CD8-positive, alpha-beta T cell (primary cell): ENCODE measurements at regions of chr6 and their contacts with region 1.

Region 1: DNA sequence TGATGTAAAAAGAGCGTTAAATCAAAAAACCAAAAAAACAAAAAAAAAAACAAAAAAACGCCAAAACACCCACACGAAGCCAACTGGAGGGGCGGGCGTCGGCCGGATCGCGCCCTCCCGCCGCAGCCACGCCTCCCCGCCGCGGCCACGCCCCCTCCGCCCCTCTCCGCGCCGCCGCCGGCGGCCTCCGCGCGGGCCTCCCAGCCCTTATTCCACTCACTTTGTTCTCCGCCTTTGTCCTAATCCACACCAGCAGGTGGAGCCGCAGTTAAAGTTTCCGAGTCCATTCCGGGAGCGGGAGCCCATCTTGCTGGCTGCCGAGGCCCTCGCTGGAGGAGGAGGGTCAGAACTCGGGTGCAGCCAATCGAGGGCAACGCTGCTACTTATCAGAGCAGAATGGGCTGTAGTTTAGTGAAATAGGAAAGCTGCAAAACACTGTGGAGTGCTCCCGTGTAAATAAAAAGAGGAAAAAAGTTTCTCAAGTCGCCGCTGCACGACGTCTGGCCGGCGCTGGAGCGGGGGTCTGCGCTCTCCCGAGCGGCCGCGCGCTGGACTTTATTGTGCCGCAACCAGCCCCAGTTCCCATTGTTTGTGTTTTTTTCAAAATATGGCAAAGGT is at the start of gene ASF1A:
- DNase-seq: peak; percentile 90 to 98 (median 95)
- ATAC-seq: peak; percentile 76
- H3K4me3 ChIP-seq: peak within 1 kb of the TSS; percentile 82 to 94
- H3K4me3 Mint-ChIP-seq: peak within 1 kb of the TSS; percentile 93
- H3K27ac ChIP-seq: peak within 1 kb of the TSS; percentile 78 to 79
- H3K27ac Mint-ChIP-seq: peak within 1 kb of the TSS; percentile 99
- H3K4me1 ChIP-seq: peaks cover 60% of the 10 kb centered on the region
- H3K4me1 Mint-ChIP-seq: peaks cover 66% of the 10 kb centered on the region
- H3K27me3 ChIP-seq: no peaks in the 10 kb centered on the region
- H3K27me3 Mint-ChIP-seq: no peaks in the 10 kb centered on the region
- CTCF ChIP-seq: no peak
- total RNA-seq, gene ASF1A: 15.6 to 17.1 TPM

Region 2: GRCh38 chr6:117602151-117602898 is 1291.6 kb before region 1 on chr6 and contains the start of gene GOPC:
- CTCF ChIA-PET with region 1: no interaction called
- POLR2A ChIA-PET with region 1: no interaction called
- intact Hi-C with region 1: loop called in 1 of 2 experiments (anchors 10 kb)
- DNase-seq: peak; percentile 88 to 99 (median 93)
- ATAC-seq: peak; percentile 94
- H3K4me3 ChIP-seq: peak within 1 kb of the TSS; percentile 76 to 86
- H3K4me3 Mint-ChIP-seq: peak within 1 kb of the TSS; percentile 100
- H3K27ac ChIP-seq: peak within 1 kb of the TSS; percentile 79 to 85
- H3K27ac Mint-ChIP-seq: peak within 1 kb of the TSS; percentile 99
- H3K4me1 ChIP-seq: peaks cover 16% of the 10 kb centered on the region
- H3K4me1 Mint-ChIP-seq: peaks cover 46% of the 10 kb centered on the region
- H3K27me3 ChIP-seq: no peaks in the 10 kb centered on the region
- H3K27me3 Mint-ChIP-seq: no peaks in the 10 kb centered on the region
- CTCF ChIP-seq: no peak
- total RNA-seq, gene GOPC: 7.5 to 8.1 TPM

Region 3: GRCh38 chr6:118436482-118436881 is 457.4 kb before region 1 on chr6:
- CTCF ChIA-PET with region 1: no interaction called
- POLR2A ChIA-PET with region 1: no interaction called
- intact Hi-C with region 1: no loop called
- DNase-seq: no peak
- ATAC-seq: no peak
- H3K4me3 ChIP-seq: no peak overlapping the region
- H3K4me3 Mint-ChIP-seq: no peak overlapping the region
- H3K27ac ChIP-seq: no peak overlapping the region
- H3K27ac Mint-ChIP-seq: no peak overlapping the region
- H3K4me1 ChIP-seq: no peaks in the 10 kb centered on the region
- H3K4me1 Mint-ChIP-seq: no peaks in the 10 kb centered on the region
- H3K27me3 ChIP-seq: no peaks in the 10 kb centered on the region
- H3K27me3 Mint-ChIP-seq: no peaks in the 10 kb centered on the region
- CTCF ChIP-seq: no peak

Region 4: GRCh38 chr6:118565311-118565960 is 328.5 kb before region 1 on chr6:
- CTCF ChIA-PET with region 1: interaction called, 6 read pairs
- POLR2A ChIA-PET with region 1: interaction called, 5 read pairs
- intact Hi-C with region 1: loop called (anchors 5 kb)
- DNase-seq: peak in 3 of 9 experiments; percentile 13 to 78 (median 66)
- ATAC-seq: peak; percentile 97
- H3K4me3 ChIP-seq: no peak overlapping the region
- H3K4me3 Mint-ChIP-seq: no peak overlapping the region
- H3K27ac ChIP-seq: no peak overlapping the region
- H3K27ac Mint-ChIP-seq: peak overlapping the region; percentile 85
- H3K4me1 ChIP-seq: peaks cover 3% of the 10 kb centered on the region
- H3K4me1 Mint-ChIP-seq: peaks cover 48% of the 10 kb centered on the region
- H3K27me3 ChIP-seq: no peaks in the 10 kb centered on the region
- H3K27me3 Mint-ChIP-seq: no peaks in the 10 kb centered on the region
- CTCF ChIP-seq: peak; percentile 72

Region 5: DNA sequence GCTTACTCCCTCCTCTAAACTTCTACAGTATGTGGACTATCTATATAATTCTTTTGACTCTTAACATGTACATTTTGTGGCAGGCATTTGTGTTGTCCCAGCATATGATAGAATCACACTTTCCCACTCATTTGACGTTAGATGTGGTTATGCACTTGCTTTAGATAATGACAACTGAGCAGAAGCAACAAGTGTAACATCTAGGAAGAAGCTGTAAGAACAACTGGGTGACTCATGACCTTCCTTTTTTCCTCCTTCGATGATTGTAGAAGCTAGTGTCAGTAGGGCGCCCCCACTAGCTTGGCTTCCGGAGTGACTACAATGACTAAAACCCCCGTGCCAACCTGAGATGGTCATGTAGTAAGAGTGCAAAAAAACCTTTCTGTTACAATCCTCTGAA is 168.0 kb before region 1 on chr6:
- CTCF ChIA-PET with region 1: interaction called, 3 read pairs
- POLR2A ChIA-PET with region 1: no interaction called
- intact Hi-C with region 1: loop called in 1 of 2 experiments (anchors 5 kb)
- DNase-seq: peak in 8 of 9 experiments; percentile 52 to 88 (median 74)
- ATAC-seq: peak; percentile 92
- H3K4me3 ChIP-seq: no peak overlapping the region
- H3K4me3 Mint-ChIP-seq: peak overlapping the region; percentile 38
- H3K27ac ChIP-seq: peak overlapping the region in 1 of 2 experiments; percentile 36
- H3K27ac Mint-ChIP-seq: peak overlapping the region; percentile 82
- H3K4me1 ChIP-seq: peaks cover 49% of the 10 kb centered on the region
- H3K4me1 Mint-ChIP-seq: peaks cover 67% of the 10 kb centered on the region
- H3K27me3 ChIP-seq: no peaks in the 10 kb centered on the region
- H3K27me3 Mint-ChIP-seq: no peaks in the 10 kb centered on the region
- CTCF ChIP-seq: peak; percentile 33

Region 6: DNA sequence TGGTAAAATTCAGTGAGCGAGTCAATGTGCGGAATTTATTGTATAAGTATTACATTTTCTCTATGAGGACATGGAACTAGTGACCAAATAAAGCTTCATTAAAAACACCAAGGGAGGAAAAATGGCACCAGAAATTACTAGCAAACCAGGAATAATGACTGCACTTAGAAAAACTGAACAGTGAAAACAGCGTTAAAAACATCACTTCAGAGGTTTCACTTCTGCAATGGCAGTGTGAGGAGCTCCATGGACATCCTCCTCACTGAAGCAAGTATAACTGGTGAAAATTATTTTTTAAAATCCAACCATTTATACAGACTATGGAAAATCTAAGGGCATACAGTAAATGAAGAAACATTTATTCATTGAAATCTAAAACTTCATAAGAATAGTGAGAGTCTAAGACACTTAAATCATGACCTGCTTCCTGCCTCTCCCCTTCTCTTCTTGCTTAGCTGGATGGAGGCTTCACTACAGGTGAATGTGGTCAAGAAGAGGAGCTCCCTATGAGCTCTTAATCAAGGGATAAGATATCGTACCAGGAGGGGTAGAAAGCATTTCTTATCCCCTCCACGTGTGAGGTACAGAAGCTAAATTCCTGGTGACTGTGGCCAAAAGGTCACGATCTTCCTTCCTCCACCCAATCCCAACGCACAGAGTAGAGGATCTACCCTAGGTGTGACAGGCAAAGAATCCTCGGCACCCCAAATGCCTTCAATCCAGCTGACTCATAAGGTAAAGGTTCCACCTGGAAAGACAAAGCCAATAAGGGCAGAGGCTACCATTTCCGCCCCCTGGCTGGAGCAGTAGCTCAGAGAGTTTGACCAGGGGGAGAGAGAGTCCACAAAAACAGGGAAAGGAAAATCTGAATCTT is 12.2 kb before region 1 on chr6:
- CTCF ChIA-PET with region 1: interaction called, 5 read pairs
- POLR2A ChIA-PET with region 1: interaction called, 5 read pairs
- intact Hi-C with region 1: loop called in 1 of 2 experiments (anchors 1 kb)
- DNase-seq: no peak
- ATAC-seq: no peak
- H3K4me3 ChIP-seq: no peak overlapping the region
- H3K4me3 Mint-ChIP-seq: peak overlapping the region; percentile 27
- H3K27ac ChIP-seq: no peak overlapping the region
- H3K27ac Mint-ChIP-seq: no peak overlapping the region
- H3K4me1 ChIP-seq: peaks cover 23% of the 10 kb centered on the region
- H3K4me1 Mint-ChIP-seq: peaks cover 72% of the 10 kb centered on the region
- H3K27me3 ChIP-seq: no peaks in the 10 kb centered on the region
- H3K27me3 Mint-ChIP-seq: no peaks in the 10 kb centered on the region
- CTCF ChIP-seq: no peak

Region 7: GRCh38 chr6:119078376-119079282 is 184.7 kb after region 1 on chr6 and contains the start of gene FAM184A:
- CTCF ChIA-PET with region 1: no interaction called
- POLR2A ChIA-PET with region 1: interaction called, 5 read pairs
- intact Hi-C with region 1: loop called (anchors 1 kb)
- DNase-seq: peak; percentile 50 to 86 (median 71)
- ATAC-seq: peak; percentile 74
- H3K4me3 ChIP-seq: peak within 1 kb of the TSS; percentile 58 to 66
- H3K4me3 Mint-ChIP-seq: peak within 1 kb of the TSS; percentile 94
- H3K27ac ChIP-seq: peak within 1 kb of the TSS; percentile 34 to 46
- H3K27ac Mint-ChIP-seq: peak within 1 kb of the TSS; percentile 91
- H3K4me1 ChIP-seq: peaks cover 25% of the 10 kb centered on the region
- H3K4me1 Mint-ChIP-seq: peaks cover 32% of the 10 kb centered on the region
- H3K27me3 ChIP-seq: no peaks in the 10 kb centered on the region
- H3K27me3 Mint-ChIP-seq: no peaks in the 10 kb centered on the region
- CTCF ChIP-seq: no peak
- total RNA-seq, gene FAM184A: 0.50 to 0.79 TPM